ENCODE measurements at regions of chr1 and their contacts with region 1.

Region 1: GRCh38 chr1:54800899-54801759 is at the start of gene TTC22:
- DNase-seq: peak; percentile 35
- ATAC-seq: peak; percentile 87
- H3K4me3 ChIP-seq: peak within 1 kb of the TSS; percentile 72
- H3K27ac ChIP-seq: no peak within 1 kb of the TSS; the same call in 1 of the 2 replicates
- H3K4me1 ChIP-seq: peaks cover 37% of the 10 kb centered on the region
- H3K27me3 ChIP-seq: no peaks in the 10 kb centered on the region
- CTCF ChIP-seq: peak; percentile 63 to 78 (median 74)
- EP300 ChIP-seq: no peak
- POLR2A ChIP-seq: peak; percentile 76
- RAD21 ChIP-seq: peak; percentile 55
- polyA plus RNA-seq, gene TTC22: 0.64 to 0.89 TPM

Region 2: GRCh38 chr1:54666333-54666732 is 134.8 kb before region 1 on chr1:
- CTCF ChIA-PET with region 1: interaction called, 18 read pairs
- POLR2A ChIA-PET with region 1: no interaction called
- RAD21 ChIA-PET with region 1: interaction called, 3 read pairs
- SMC1A ChIA-PET with region 1: no interaction called
- in situ Hi-C with region 1: no loop called
- intact Hi-C with region 1: no loop called
- DNase-seq: no peak
- ATAC-seq: no peak
- H3K4me3 ChIP-seq: no peak overlapping the region
- H3K27ac ChIP-seq: no peak overlapping the region
- H3K4me1 ChIP-seq: no peaks in the 10 kb centered on the region
- H3K27me3 ChIP-seq: no peaks in the 10 kb centered on the region
- CTCF ChIP-seq: no peak
- EP300 ChIP-seq: no peak
- POLR2A ChIP-seq: no peak
- RAD21 ChIP-seq: no peak

Region 3: GRCh38 chr1:54671985-54672608 is 129.0 kb before region 1 on chr1:
- CTCF ChIA-PET with region 1: interaction called, 18 read pairs
- POLR2A ChIA-PET with region 1: no interaction called
- RAD21 ChIA-PET with region 1: interaction called, 10 read pairs
- SMC1A ChIA-PET with region 1: interaction called, 4 read pairs
- in situ Hi-C with region 1: no loop called
- intact Hi-C with region 1: no loop called
- DNase-seq: peak; percentile 17
- ATAC-seq: peak; percentile 96
- H3K4me3 ChIP-seq: no peak overlapping the region
- H3K27ac ChIP-seq: no peak overlapping the region
- H3K4me1 ChIP-seq: no peaks in the 10 kb centered on the region
- H3K27me3 ChIP-seq: peaks cover 0 to 2% of the 10 kb centered on the region in 2 experiments; a peak in 2 of 4 replicates
- CTCF ChIP-seq: peak; percentile 88 to 98 (median 88)
- EP300 ChIP-seq: no peak
- POLR2A ChIP-seq: no peak
- RAD21 ChIP-seq: peak; percentile 95

Region 4: DNA sequence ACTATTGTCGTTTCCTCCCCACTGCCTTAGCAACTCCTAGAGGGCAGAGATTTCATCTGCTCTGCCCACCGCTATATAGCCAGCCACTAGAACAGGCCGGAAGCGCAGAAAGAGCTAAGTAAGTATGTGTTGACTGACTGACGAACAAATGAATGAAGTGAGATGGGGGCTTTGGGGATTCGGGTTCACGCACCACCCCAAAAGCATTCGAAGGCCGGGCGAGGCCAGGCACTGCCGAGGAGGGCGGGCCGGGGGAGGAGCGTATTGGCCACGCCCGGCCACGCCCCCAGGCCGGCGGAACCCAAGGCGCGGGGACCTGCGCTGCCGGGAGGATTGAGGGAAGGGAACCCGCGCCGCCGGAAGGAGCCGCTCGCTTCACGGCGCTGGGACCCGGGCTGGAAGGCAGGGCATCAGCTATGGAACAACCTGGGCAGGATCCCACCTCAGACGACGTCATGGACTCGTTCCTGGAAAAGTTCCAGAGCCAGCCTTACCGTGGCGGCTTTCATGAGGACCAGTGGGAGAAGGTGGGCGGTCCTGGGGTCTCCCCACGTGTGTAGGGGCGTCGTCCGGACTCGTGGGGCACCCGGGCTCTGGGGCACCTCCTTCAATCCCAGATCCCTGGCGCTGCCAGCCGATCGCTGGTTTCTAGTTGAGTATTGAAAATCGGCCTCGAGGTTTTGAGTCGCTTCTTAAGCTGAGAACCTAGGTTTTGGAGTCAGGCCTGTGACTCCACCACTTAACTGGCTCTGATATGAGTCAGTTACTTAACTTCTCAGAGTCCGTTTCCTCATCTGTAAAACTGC is 85.4 kb before region 1 on chr1 and contains the start of gene TTC4:
- CTCF ChIA-PET with region 1: interaction called, 4 read pairs
- POLR2A ChIA-PET with region 1: interaction called, 3 read pairs
- RAD21 ChIA-PET with region 1: interaction called, 12 read pairs
- SMC1A ChIA-PET with region 1: no interaction called
- in situ Hi-C with region 1: no loop called
- intact Hi-C with region 1: loop called (anchors 5 kb)
- DNase-seq: peak; percentile 40
- ATAC-seq: peak; percentile 98
- H3K4me3 ChIP-seq: peak within 1 kb of the TSS; percentile 77
- H3K27ac ChIP-seq: peak within 1 kb of the TSS; percentile 78
- H3K4me1 ChIP-seq: peaks cover 3% of the 10 kb centered on the region; the same call in 1 of the 2 replicates
- H3K27me3 ChIP-seq: no peaks in the 10 kb centered on the region; a peak in 1 of 4 replicates
- CTCF ChIP-seq: no peak
- EP300 ChIP-seq: peak in 1 of 2 experiments; percentile 19; a peak in 1 of 4 replicates
- POLR2A ChIP-seq: peak; percentile 97
- RAD21 ChIP-seq: no peak
- polyA plus RNA-seq, gene TTC4: 28.8 to 50.1 TPM

Region 5: GRCh38 chr1:54764133-54764921 is 36.8 kb before region 1 on chr1 and contains the start of gene PARS2:
- CTCF ChIA-PET with region 1: interaction called, 60 read pairs
- POLR2A ChIA-PET with region 1: interaction called, 3 read pairs
- RAD21 ChIA-PET with region 1: interaction called, 10 read pairs
- SMC1A ChIA-PET with region 1: interaction called, 11 read pairs
- in situ Hi-C with region 1: no loop called
- intact Hi-C with region 1: loop called (anchors 2 kb)
- DNase-seq: peak; percentile 97
- ATAC-seq: peak; percentile 97
- H3K4me3 ChIP-seq: peak within 1 kb of the TSS; percentile 99
- H3K27ac ChIP-seq: peak within 1 kb of the TSS; percentile 71
- H3K4me1 ChIP-seq: peaks cover 9% of the 10 kb centered on the region
- H3K27me3 ChIP-seq: no peaks in the 10 kb centered on the region
- CTCF ChIP-seq: no peak
- EP300 ChIP-seq: no peak
- POLR2A ChIP-seq: peak; percentile 93
- RAD21 ChIP-seq: no peak
- polyA plus RNA-seq, gene PARS2: 3.7 to 4.3 TPM